ENCODE measurements at regions of chr6 and their contacts with region 1.

Region 1: DNA sequence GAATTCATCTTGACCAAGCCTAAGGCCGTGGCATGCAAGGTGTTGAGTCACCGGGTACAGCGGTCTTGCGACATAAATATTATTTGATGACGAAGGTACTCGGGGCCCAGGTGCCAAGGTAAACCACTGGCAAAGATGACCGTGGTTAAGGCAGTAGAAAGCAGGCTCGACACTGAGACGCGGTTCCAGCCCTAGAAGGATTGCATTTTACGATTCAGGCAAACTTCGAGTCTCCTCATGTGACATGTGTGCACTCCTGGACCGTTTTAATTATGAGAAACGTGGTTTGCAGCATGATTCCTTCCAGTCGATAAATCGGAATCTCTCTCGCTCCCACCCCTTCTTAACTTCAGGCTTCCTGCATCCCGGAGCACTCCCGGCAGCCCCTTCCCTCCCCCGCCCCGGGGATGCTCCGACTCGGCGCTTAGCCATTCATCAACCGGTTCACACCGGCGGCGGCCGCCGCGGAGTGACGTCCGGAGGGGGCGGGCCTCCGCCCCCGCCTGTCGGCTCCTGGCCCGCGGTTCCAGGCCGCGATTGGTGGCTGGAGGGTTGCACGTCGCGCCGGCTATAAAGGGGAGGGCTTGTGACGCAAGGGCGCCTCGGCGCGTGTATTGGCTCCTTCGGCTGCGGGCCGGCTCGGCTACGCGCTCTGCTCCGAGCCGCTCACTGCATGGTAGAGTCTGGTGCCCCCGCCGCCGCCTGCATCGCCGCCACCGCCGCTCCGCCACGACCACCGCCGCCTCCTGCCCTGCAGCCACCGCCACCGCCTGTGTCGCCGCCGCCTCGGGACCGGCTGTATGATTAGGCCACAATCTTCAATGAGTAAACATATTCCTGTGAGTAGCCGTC is at the starts of genes LOC128125822 and PTP4A1:
- DNase-seq: peak; percentile 99
- ATAC-seq: peak; percentile 98
- total RNA-seq, gene PTP4A1: 32.5 TPM

Region 2: DNA sequence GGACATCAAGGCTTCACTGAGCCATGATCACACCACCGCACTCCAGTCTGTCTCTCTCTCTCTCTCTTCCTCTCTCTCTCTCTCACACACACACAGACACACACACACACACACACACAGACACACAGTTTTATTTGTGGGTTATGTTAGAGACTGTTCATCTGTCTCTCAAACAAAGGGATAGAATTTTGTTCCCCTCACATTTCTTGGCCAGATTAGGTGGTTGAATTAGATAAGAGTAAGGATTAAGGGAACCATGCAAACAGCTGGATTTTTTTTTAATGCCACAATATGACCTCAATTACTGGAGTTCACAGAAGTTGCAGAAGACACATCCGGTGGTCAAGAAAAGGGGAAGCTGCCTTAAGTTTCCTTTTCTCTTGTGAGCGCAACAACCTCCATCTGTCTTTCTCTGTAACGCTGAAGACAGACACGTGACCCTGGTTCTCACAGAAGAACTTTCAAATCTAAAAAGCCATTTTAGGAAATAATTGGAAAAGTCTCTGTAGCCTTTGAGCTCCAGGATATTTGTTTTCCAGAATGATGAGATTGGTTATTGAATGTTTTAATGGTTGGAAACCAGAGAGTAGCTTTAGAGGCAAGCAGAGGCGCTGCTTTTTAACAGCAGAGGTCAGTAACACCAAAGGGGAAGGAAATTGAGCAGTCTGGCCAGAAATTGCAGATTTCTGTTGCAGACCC is 219.4 kb before region 1 on chr6:
- intact Hi-C with region 1: loop called (anchors 2 kb)
- DNase-seq: no peak
- ATAC-seq: peak; percentile 73

Region 3: DNA sequence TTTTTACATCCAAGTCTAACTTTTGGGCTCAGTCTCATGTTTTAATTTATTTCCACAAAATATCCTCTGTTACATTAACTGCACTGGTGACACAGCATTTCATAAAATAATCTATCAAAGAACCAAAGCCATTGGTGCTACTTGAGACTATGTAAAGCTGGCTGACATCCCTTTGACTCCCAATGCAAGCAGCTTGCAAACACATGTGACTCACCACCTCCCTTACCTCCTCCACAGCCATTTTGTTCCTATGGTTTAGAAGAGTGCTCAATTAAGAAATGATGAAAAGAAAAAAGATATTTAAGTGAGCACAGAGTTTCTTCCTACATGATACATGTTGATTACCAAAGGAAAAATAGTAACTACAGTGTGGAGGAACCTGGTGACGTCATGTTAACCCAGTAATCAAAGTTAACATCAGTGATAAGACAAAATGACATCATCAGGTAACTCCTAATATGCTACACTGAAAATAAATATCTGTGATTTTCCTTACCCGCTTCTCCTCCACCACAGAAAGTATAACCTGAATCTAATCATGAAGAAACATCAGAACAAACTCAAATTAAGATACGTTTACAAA is 199.1 kb before region 1 on chr6:
- intact Hi-C with region 1: no loop called
- DNase-seq: no peak
- ATAC-seq: no peak

Region 4: DNA sequence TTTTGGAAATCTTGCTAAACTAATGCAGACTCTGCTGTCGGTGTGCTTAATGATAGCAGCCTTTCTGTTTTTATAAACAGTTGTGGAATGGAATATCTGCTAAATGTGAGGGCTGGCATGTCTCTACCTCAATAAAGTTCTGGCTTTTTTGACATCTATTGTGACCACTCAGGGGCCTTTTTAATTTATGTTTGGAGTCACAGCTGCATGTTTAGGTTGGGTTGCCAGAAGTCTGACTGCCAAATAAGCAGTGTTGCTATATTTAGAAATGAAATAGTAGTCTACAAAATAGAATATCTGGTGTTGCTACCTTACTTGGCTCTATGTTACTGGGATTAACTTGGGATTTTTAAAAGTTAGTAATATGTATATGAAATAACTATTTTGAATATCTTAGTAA is 125.0 kb before region 1 on chr6:
- intact Hi-C with region 1: loop called (anchors 5 kb)
- DNase-seq: no peak
- ATAC-seq: no peak

Region 5: DNA sequence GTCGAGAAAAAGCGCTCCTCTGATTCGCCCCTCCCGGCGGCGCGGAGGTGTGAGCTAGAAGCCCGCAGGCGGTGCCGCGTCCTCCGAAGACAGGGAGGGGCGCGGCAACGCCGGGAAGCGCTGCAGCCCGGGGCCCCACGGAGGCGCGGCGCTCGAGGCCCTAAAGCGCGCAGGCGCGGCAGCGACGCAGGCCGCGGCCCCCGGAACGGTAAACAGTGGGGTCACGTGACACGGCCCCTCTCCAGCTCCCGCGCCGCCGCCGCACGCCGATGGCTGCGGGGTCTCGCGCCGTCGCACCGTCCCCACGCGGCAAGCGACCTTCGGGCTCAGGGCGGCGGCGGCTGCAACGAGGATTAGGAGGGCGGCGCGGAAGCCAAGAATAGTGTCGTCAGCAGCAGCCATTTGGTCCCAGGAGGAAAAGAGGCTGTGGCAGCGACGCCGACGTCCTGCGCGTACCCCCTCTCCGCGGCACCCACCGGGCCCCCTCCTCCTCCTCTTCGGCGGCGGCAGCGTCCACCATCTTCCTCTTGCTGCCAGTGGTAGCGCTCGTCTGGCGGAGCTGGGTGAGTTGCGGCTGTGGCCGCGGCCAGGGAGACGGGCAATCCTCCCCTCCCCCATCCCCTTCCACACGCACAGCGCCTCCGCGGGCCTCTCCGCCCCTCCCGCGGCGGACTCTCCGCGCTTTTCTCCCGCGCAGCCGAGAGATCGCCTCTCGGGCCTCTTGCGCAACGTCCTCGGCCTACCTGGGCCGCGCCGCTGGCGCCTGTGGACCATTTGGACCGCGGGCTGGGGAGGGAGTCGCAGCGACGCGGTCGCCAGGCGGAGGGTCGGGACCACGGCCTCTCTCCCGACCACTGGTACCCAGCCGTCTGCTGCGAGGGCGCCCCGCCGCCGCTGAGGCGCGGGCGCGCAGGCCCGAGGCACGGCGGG is 63.7 kb after region 1 on chr6 and contains the start of gene PHF3:
- intact Hi-C with region 1: loop called (anchors 2 kb)
- DNase-seq: peak; percentile 95
- ATAC-seq: peak; percentile 98
- total RNA-seq, gene PHF3: 33.4 TPM

Measured in Right ventricle myocardium inferior (tissue), 1 donor.